AG04449 (cell line): ENCODE measurements at regions of chr20 and their contacts with region 1.

Region 1: GRCh38 chr20:32779500-32780211 is 17.5 kb downstream of the DNMT3B start:
- DNase-seq: no peak
- H3K4me3 ChIP-seq: no peak overlapping the region
- CTCF ChIP-seq: no peak

Region 2: GRCh38 chr20:32116079-32116521 is 663.6 kb before region 1 on chr20:
- CTCF ChIA-PET with region 1: no interaction called
- POLR2A ChIA-PET with region 1: no interaction called
- DNase-seq: no peak
- H3K4me3 ChIP-seq: no peak overlapping the region
- CTCF ChIP-seq: no peak

Region 3: GRCh38 chr20:32179515-32179914 is 600.1 kb before region 1 on chr20:
- CTCF ChIA-PET with region 1: no interaction called
- POLR2A ChIA-PET with region 1: no interaction called
- DNase-seq: no peak
- H3K4me3 ChIP-seq: no peak overlapping the region
- CTCF ChIP-seq: no peak

Region 4: GRCh38 chr20:32521780-32522525 is 257.7 kb before region 1 on chr20:
- CTCF ChIA-PET with region 1: interaction called, 51 read pairs
- POLR2A ChIA-PET with region 1: no interaction called
- DNase-seq: no peak
- H3K4me3 ChIP-seq: no peak overlapping the region
- CTCF ChIP-seq: peak; percentile 91

Region 5: DNA sequence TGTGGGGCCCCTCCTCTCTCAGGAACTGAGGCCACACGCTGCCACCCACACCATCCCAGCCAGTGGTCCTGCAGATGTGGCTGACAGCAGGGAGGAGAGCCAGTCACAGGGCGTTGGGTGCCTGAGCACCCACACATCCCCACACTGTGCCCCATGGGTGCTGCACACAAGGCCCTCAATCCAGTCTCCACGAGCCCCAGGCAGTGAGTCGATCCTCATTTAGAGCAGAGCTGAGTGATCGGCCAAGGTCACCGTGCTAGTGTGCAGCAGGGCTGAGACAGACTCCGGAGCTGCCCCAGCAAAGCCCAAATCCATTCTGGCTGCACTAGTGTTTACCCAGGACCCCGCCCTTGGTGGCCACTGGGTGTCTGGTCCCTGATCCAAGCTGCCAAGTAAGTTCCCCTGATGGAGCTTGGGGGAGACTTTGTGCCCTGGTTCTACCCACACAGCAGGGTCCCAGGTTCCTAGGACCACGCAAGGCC is 114.9 kb before region 1 on chr20:
- CTCF ChIA-PET with region 1: interaction called, 437 read pairs
- POLR2A ChIA-PET with region 1: no interaction called
- DNase-seq: no peak
- H3K4me3 ChIP-seq: no peak overlapping the region
- CTCF ChIP-seq: no peak

Region 6: DNA sequence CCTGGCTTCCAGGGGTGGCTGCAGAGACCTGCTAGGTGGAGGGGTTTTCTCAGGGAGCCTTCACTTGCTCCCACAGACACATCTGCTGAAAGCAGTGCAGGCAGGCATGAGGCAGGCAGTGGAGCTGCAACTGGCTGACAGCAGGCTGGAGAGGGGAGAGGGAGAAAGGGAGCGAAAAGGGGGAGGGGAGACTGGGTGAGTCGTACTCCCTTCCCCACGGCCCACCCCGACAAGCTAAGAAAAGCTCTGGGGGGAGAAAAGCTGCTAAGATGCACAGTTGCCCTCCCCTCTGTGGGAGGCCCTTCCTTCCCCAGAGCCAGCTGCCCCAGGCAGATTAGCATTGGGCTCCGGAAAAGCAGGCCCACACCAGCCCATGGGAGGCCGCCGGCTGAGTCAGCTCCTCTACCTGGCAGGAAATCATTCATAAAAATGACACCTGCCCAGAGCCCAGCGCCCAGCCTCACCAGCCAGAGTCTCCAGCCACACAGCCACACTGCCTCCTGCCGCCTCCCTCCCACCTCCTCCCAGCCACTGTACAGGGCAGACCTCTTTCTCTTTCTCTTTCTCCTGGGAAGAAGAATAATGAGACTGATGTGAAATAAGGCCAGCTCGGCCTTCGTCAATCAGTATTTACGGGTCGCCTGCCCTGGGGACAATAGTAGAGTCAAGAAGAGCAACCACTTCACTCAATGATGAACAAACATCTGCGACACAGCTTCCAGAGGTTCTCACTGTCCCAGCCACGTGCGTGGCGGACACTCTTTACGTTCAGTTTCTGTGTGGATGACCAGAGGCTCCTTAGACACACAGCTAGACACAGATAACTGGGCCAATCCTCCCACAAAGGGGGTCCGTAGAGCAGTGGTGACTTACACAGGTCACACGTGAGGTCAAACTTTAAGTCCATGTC is 98.2 kb before region 1 on chr20:
- CTCF ChIA-PET with region 1: interaction called, 437 read pairs
- POLR2A ChIA-PET with region 1: interaction called, 4 read pairs
- DNase-seq: no peak
- H3K4me3 ChIP-seq: no peak overlapping the region
- CTCF ChIP-seq: no peak

Region 7: GRCh38 chr20:32762149-32762753 is 17.4 kb before region 1 on chr20 and contains the start of gene DNMT3B:
- CTCF ChIA-PET with region 1: interaction called, 132 read pairs
- POLR2A ChIA-PET with region 1: interaction called, 3 read pairs
- DNase-seq: no peak
- H3K4me3 ChIP-seq: peak within 1 kb of the TSS; percentile 75
- CTCF ChIP-seq: peak; percentile 14

Region 8: DNA sequence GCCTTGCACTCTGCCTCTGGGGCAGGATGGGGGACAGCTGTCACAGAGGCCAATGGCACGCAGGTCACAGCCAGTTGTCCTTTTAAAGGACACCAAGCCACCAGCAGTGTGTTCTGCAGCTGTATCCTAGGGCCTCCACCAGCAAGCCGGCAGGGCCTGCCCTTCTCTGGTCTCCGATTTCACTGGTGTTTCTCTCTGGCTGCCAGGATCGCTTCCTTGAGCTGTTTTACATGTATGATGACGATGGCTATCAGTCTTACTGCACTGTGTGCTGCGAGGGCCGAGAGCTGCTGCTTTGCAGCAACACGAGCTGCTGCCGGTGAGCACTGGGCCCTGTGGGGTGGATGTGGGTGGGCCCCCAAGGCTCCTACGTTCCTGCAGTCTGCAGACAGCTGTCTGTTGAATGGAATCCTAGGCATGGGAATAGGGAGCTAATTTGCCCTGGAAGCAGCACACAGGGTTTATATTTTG is 17.4 kb after region 1 on chr20:
- CTCF ChIA-PET with region 1: interaction called, 19 read pairs
- POLR2A ChIA-PET with region 1: no interaction called
- DNase-seq: no peak
- H3K4me3 ChIP-seq: no peak overlapping the region
- CTCF ChIP-seq: no peak

Region 9: DNA sequence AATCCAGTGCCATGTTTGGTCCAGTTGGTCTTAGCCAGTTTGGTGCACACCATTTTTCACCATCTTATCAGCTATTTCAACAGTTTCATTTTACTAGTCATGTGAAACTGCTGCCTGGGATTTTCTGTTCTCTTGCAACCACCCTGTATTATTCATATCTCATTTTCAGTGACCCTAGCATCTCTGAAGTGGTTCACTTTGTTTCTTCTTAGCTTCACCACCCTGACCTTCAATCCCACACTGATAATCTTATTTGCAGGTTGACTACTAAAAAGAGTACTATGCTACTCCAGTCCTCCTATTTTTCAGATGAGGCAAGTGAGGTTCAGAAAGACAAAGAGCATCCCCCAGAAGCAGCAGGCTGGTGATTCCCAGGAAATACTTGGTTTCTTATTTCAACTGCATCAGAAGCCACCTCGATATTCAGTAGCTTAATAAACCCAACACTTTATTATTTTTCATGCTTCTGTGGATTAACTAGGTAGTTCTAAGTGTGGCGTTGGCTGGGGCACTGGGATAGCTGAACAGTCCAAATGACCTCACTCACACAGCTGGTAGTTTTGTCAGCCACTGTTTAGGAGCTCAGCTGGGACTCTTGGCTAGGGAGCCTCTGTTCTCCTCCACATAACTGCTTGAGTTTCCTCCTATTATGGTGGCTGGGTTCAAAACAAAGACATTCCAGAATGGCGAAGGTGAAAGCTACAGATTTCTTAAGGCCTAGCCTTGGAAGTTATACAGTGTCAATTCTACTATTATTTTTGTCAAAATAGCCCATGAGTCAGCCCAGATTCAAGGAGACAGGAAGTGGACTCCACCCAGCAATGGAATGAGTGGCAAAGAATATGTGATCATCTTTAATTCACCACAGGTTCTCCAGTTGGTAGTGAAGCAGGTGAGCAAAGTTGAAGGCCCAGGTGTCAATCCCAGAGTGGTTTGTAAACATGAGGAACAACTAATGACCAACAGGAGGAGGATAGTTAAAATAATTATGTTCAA is 340.4 kb after region 1 on chr20:
- CTCF ChIA-PET with region 1: no interaction called
- POLR2A ChIA-PET with region 1: no interaction called
- DNase-seq: no peak
- H3K4me3 ChIP-seq: no peak overlapping the region
- CTCF ChIP-seq: no peak

Region 10: DNA sequence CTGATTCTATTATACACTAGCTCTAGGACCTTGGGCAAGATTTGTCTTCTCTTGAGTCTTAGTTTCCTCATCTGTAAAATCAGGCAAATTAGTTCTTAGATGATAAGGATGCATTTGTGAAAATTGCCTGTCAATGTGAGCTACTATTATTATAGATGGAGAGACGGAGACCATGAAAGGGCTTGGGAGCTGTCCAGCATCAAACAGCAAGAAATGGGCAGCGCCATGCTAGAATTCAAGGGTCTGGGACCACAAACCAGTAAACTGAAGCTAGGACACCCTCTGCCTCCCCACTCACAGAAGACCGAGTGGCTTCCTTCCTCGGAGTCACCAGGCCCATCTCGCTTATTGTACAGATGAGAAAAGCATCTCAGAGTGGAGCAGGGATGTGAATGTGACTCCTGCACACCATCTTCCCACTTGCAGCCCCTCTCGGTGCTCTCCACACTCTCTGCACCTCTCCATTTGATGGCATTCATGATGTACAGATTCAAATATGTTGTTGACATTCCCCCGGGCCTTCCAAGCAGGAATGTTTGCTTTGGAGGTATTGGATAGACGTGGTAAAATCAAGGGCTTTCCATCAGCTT is 413.4 kb after region 1 on chr20:
- CTCF ChIA-PET with region 1: no interaction called
- POLR2A ChIA-PET with region 1: no interaction called
- DNase-seq: no peak
- H3K4me3 ChIP-seq: no peak overlapping the region
- CTCF ChIP-seq: no peak